ENCODE measurements at regions of chr14 and their contacts with region 1.

Region 1: DNA sequence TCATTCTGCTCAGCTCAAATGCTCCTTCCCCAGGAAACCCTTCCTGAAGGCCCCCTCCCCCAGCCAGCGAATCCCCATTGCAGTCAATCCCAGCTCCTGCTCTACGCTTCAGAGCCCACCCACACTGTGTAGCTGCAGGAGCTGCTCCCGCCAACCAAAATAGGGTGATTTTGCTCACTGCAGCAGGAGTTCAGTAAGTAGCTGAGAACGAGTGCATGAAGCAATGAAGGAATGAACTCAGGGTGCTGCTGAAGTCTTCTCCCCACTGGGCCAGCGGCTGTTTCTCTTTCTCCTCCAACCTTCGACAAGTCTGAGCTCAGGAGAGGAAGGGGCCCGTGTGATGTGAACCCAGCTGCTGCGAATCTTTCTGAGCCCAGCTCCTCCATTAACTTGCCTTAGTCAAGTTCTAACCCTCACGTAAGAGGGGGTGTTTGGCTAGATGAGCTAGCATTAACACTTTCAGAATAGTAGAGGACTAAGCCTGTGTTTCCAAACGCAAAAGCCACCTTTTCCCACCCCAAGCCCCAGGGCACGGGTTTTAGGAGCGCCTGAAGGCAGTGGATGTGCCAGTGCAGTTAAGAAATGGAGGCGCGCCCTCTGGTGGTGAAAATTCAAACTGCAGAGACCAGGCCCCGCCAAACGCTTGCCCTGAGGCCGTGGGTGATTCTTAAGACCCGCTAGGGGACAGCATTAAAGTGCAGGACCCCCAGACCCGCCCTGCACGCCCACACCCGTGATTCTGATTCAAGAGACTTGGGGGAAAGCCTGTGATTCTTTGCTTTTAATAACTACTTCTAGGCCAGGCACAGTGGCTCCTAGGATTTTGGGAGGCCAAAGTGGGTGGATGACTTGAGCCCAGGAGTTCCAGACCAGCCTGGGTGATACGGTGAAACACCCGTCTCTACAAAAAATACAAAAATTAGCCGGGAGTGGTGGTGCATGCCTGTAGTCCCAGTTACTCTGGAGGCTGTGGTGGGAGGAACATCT is 11.9 kb upstream of the SERPINA4 start:
- DNase-seq: peak; percentile 38
- H3K4me3 ChIP-seq: no peak overlapping the region
- H3K27ac ChIP-seq: no peak overlapping the region
- H3K4me1 ChIP-seq: no peaks in the 10 kb centered on the region
- H3K27me3 ChIP-seq: no peaks in the 10 kb centered on the region
- CTCF ChIP-seq: peak; percentile 75 to 78
- POLR2A ChIP-seq: no peak

Region 2: GRCh38 chr14:94423453-94424056 is 125.7 kb before region 1 on chr14:
- CTCF ChIA-PET with region 1: interaction called, 34 read pairs
- POLR2A ChIA-PET with region 1: no interaction called
- dilution Hi-C with region 1: no loop called
- intact Hi-C with region 1: loop called (anchors 1 kb)
- DNase-seq: peak; percentile 41
- H3K4me3 ChIP-seq: no peak overlapping the region
- H3K27ac ChIP-seq: no peak overlapping the region
- H3K4me1 ChIP-seq: no peaks in the 10 kb centered on the region
- H3K27me3 ChIP-seq: no peaks in the 10 kb centered on the region
- CTCF ChIP-seq: peak; percentile 64 to 67
- POLR2A ChIP-seq: no peak

Region 3: DNA sequence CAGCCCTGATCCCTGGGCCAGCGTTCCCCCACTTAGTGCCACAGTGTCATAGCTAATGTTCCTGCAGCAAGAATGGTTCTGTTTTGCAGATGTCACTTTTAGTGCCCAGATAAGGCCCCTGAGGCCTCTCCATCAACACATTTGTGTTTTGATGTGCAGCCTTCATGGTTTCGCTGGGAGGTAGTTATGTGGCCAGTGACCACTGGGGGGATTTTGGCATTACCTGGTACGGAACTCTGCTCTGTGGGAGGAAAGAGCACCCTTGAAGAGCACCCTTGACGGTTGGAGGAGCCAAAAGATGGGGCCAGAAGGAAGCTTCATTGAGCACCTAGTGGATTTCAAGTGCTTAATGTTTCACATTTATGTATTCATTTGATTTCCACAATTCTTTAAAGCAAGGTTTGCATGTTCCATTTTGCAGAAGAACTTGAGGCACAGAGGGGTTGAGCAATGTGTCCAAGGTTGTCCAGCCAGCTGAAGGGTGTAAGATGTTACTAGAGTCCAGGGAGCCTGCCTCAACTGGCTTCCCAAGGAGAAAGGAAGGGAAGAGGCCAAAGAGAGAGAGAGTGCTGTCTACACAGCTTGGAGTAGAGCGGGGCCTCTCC is 109.7 kb before region 1 on chr14:
- CTCF ChIA-PET with region 1: interaction called, 5 read pairs
- POLR2A ChIA-PET with region 1: no interaction called
- dilution Hi-C with region 1: no loop called
- intact Hi-C with region 1: loop called (anchors 1 kb)
- DNase-seq: no peak
- H3K4me3 ChIP-seq: no peak overlapping the region
- H3K27ac ChIP-seq: no peak overlapping the region
- H3K4me1 ChIP-seq: no peaks in the 10 kb centered on the region
- H3K27me3 ChIP-seq: no peaks in the 10 kb centered on the region
- CTCF ChIP-seq: no peak
- POLR2A ChIP-seq: no peak

Region 4: GRCh38 chr14:94571950-94572349 is 22.7 kb after region 1 on chr14:
- CTCF ChIA-PET with region 1: no interaction called
- POLR2A ChIA-PET with region 1: no interaction called
- dilution Hi-C with region 1: no loop called
- intact Hi-C with region 1: no loop called
- DNase-seq: peak; percentile 11
- H3K4me3 ChIP-seq: no peak overlapping the region
- H3K27ac ChIP-seq: no peak overlapping the region
- H3K4me1 ChIP-seq: no peaks in the 10 kb centered on the region
- H3K27me3 ChIP-seq: no peaks in the 10 kb centered on the region
- CTCF ChIP-seq: no peak
- POLR2A ChIP-seq: no peak

Region 5: GRCh38 chr14:94654071-94654861 is 105.0 kb after region 1 on chr14:
- CTCF ChIA-PET with region 1: no interaction called
- POLR2A ChIA-PET with region 1: no interaction called
- dilution Hi-C with region 1: no loop called
- intact Hi-C with region 1: no loop called
- DNase-seq: no peak
- H3K4me3 ChIP-seq: no peak overlapping the region
- H3K27ac ChIP-seq: no peak overlapping the region
- H3K4me1 ChIP-seq: no peaks in the 10 kb centered on the region
- H3K27me3 ChIP-seq: no peaks in the 10 kb centered on the region
- CTCF ChIP-seq: no peak
- POLR2A ChIP-seq: no peak

Measured in endothelial cell of umbilical vein (primary cell).